CD4-positive, alpha-beta T cell (primary cell): ENCODE measurements at regions of chr2 and their contacts with region 1.

Region 1: GRCh38 chr2:45993476-45993991 is 303.7 kb upstream of the EPAS1 start:
- DNase-seq: peak in 13 of 14 experiments; percentile 8 to 80 (median 42)
- ATAC-seq: peak; percentile 68
- H3K4me3 ChIP-seq: no peak overlapping the region
- H3K4me3 Mint-ChIP-seq: no peak overlapping the region
- H3K27ac ChIP-seq: no peak overlapping the region
- H3K27ac Mint-ChIP-seq: no peak overlapping the region
- H3K4me1 ChIP-seq: no peaks in the 10 kb centered on the region
- H3K4me1 Mint-ChIP-seq: peaks cover 6% of the 10 kb centered on the region
- H3K27me3 ChIP-seq: no peaks in the 10 kb centered on the region
- H3K27me3 Mint-ChIP-seq: no peaks in the 10 kb centered on the region
- CTCF ChIP-seq: peak; percentile 80

Region 2: DNA sequence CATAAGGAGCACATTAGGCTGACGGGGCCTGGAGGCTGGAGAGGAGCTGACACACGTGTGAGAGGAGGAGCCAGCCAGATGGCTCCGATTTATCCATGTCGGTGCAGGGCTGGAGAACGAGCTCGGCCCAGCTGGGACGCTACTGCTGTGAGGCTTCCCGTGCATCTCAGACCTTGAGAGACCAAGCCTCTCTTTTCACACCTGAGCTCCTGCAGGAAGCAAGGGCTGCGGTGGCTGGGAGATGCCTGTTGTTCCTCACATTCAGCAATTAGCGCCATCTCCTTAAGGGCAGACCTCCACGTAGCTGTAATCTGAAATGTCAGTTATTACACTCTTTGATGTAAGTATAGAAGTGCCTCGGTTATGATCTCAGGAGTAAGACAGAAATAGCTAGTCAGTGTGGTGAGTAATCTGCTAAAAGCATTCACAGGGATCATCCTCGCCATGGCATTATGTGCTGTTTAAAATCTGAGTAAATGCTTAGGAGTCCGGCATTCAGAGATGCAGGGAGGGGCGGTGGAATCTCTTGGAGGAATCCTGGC is 234.2 kb before region 1 on chr2:
- CTCF ChIA-PET with region 1: no interaction called
- POLR2A ChIA-PET with region 1: no interaction called
- intact Hi-C with region 1: no loop called
- DNase-seq: no peak
- ATAC-seq: no peak
- H3K4me3 ChIP-seq: no peak overlapping the region
- H3K4me3 Mint-ChIP-seq: no peak overlapping the region
- H3K27ac ChIP-seq: no peak overlapping the region
- H3K27ac Mint-ChIP-seq: no peak overlapping the region
- H3K4me1 ChIP-seq: no peaks in the 10 kb centered on the region
- H3K4me1 Mint-ChIP-seq: no peaks in the 10 kb centered on the region
- H3K27me3 ChIP-seq: no peaks in the 10 kb centered on the region
- H3K27me3 Mint-ChIP-seq: no peaks in the 10 kb centered on the region
- CTCF ChIP-seq: no peak

Region 3: GRCh38 chr2:45980161-45980852 is 13.2 kb before region 1 on chr2:
- CTCF ChIA-PET with region 1: no interaction called
- POLR2A ChIA-PET with region 1: no interaction called
- intact Hi-C with region 1: no loop called
- DNase-seq: no peak
- ATAC-seq: no peak
- H3K4me3 ChIP-seq: no peak overlapping the region
- H3K4me3 Mint-ChIP-seq: no peak overlapping the region
- H3K27ac ChIP-seq: no peak overlapping the region
- H3K27ac Mint-ChIP-seq: no peak overlapping the region
- H3K4me1 ChIP-seq: no peaks in the 10 kb centered on the region
- H3K4me1 Mint-ChIP-seq: no peaks in the 10 kb centered on the region
- H3K27me3 ChIP-seq: no peaks in the 10 kb centered on the region
- H3K27me3 Mint-ChIP-seq: no peaks in the 10 kb centered on the region
- CTCF ChIP-seq: no peak

Region 4: DNA sequence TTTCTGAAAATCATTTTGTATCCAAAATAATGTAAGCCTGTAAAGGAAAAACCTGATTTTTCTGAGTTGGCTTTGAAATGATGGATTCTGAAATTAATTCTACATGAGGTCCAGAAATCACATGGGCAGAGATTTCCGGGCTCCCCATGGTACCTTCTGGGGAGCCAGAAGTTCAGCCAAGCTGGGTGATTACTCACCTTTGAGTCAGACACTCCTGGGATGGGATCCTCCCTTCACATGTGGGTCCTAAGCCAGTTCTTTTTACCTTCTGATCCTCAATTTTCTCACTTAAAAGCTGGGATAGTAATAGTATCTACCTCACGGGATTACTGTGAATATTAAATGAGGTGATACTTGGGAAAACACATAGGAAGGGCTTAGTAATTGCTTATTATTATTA is 123.8 kb after region 1 on chr2:
- CTCF ChIA-PET with region 1: no interaction called
- POLR2A ChIA-PET with region 1: no interaction called
- intact Hi-C with region 1: no loop called
- DNase-seq: no peak
- ATAC-seq: no peak
- H3K4me3 ChIP-seq: no peak overlapping the region
- H3K4me3 Mint-ChIP-seq: no peak overlapping the region
- H3K27ac ChIP-seq: no peak overlapping the region
- H3K27ac Mint-ChIP-seq: no peak overlapping the region
- H3K4me1 ChIP-seq: no peaks in the 10 kb centered on the region
- H3K4me1 Mint-ChIP-seq: peaks cover 7% of the 10 kb centered on the region
- H3K27me3 ChIP-seq: no peaks in the 10 kb centered on the region
- H3K27me3 Mint-ChIP-seq: no peaks in the 10 kb centered on the region
- CTCF ChIP-seq: no peak

Region 5: DNA sequence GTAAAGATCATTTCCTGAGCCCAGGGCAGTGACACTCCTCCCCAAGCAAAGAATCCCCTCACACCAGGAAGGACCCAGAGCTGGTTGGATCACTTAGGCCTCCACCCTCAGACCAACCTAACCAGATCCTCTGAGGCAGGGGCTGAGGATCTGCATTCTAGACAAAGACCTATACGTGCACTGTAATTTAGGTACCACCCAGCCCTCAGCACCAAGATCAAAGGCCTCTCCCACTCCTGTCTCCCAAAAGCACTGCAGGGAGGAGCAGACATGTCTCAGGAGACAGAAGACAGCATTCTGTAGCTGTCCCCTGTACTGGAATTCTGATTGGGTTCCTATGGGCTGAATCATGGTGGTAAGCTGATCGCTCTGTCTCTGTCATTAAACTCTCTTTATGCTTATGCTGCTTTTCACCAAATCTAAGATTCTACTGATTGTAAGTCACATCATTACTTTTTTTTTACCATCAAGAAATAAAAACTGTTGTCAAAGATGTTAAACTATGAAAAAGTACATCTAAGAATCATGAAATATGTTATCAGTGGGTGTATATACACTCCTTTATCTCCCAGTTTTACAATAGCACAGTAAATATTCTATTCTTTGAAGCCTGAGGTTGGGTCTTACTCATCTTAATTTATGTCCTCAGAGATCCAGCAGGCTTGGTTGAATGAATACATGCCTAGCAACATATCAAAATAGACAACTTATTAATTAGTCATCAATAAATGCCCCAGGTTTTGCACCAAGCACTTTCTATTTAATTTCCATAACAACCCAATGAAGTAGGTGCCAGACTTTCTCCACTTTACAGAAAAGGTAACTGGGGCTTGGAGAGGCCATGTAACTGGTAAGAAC is 893.7 kb after region 1 on chr2:
- CTCF ChIA-PET with region 1: no interaction called
- POLR2A ChIA-PET with region 1: no interaction called
- intact Hi-C with region 1: loop called in 1 of 2 experiments (anchors 2 kb)
- DNase-seq: no peak
- ATAC-seq: no peak
- H3K4me3 ChIP-seq: no peak overlapping the region
- H3K4me3 Mint-ChIP-seq: no peak overlapping the region
- H3K27ac ChIP-seq: no peak overlapping the region
- H3K27ac Mint-ChIP-seq: no peak overlapping the region
- H3K4me1 ChIP-seq: no peaks in the 10 kb centered on the region
- H3K4me1 Mint-ChIP-seq: no peaks in the 10 kb centered on the region
- H3K27me3 ChIP-seq: peaks cover 0 to 3% of the 10 kb centered on the region in 2 experiments
- H3K27me3 Mint-ChIP-seq: peaks cover 5% of the 10 kb centered on the region
- CTCF ChIP-seq: no peak